Gastrocnemius medialis (tissue), 4 donors: ENCODE measurements at regions of chr7 and their contacts with region 1.

Region 1: GRCh38 chr7:91519241-91520158 is 255.3 kb downstream of the FZD1 start:
- DNase-seq: no peak
- ATAC-seq: no peak
- H3K4me3 ChIP-seq: no peak overlapping the region
- H3K27ac ChIP-seq: no peak overlapping the region
- H3K4me1 ChIP-seq: no peaks in the 10 kb centered on the region
- H3K27me3 ChIP-seq: no peaks in the 10 kb centered on the region
- CTCF ChIP-seq: no peak
- POLR2A ChIP-seq: no peak

Region 2: DNA sequence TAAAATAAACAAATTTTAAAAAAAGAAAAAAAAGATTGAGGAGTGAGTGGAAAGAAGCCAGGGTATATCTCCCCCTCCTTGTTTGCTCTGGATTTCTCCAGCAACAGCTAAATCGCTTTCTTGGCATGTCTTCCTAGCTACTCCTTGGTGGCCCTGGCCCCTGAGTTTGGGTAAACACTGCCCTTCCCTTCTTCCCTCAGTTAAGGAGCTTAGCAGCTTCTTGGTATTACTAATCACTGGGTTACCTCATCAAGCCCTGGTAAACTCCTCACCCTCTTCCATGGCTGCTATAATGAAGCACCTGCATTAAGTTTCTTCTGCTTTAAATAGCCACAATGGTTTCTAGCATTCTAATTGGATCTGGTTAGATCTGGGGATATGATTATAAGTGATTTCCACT is 14.5 kb after region 1 on chr7:
- in situ Hi-C with region 1: no loop called
- intact Hi-C with region 1: no loop called
- DNase-seq: no peak
- ATAC-seq: no peak
- H3K4me3 ChIP-seq: no peak overlapping the region
- H3K27ac ChIP-seq: no peak overlapping the region
- H3K4me1 ChIP-seq: no peaks in the 10 kb centered on the region
- H3K27me3 ChIP-seq: no peaks in the 10 kb centered on the region
- CTCF ChIP-seq: no peak
- POLR2A ChIP-seq: no peak

Region 3: DNA sequence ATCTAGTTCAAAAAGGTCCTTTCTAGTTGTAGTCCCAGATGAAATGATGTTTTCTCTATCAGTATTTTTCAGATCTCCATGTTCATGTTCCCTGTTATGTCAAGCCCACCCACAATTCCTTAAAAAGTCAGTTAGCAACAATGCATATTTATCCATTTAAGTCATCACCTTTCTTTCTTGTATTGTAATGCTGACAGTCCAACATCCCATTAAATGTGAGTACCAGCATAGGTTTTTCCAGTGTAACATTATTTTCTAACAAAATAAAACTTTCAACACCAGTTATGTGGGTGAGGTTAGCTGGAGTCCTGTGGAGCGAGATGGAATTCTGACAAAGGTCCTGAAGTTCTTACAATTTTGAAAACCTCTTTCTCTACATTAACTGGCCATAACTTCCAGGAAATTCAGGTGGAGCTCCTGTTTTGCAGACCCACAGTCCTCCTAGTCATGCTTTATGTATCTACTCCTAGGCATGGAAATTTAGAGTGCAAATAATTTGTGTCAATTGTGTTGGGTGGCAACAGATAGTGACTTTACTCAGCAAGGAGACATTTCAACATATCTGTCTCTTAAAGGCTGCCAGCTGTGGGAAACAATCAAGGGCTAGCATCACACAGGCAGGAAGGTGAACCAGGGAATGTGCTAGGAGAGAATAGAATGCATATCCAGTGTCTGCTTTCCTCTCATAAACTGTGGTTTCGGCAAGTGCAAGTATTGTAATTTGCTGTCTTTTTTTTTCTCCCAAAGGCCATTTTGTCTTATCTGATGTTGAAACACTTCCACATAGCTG is 198.4 kb after region 1 on chr7:
- in situ Hi-C with region 1: no loop called
- intact Hi-C with region 1: no loop called
- DNase-seq: no peak
- ATAC-seq: no peak
- H3K4me3 ChIP-seq: no peak overlapping the region
- H3K27ac ChIP-seq: no peak overlapping the region
- H3K4me1 ChIP-seq: no peaks in the 10 kb centered on the region
- H3K27me3 ChIP-seq: no peaks in the 10 kb centered on the region
- CTCF ChIP-seq: no peak
- POLR2A ChIP-seq: no peak

Region 4: GRCh38 chr7:92436612-92437445 is 917.3 kb after region 1 on chr7:
- in situ Hi-C with region 1: no loop called
- intact Hi-C with region 1: loop called (anchors 5 kb)
- DNase-seq: no peak
- ATAC-seq: no peak
- H3K4me3 ChIP-seq: no peak overlapping the region
- H3K27ac ChIP-seq: no peak overlapping the region
- H3K4me1 ChIP-seq: no peaks in the 10 kb centered on the region
- H3K27me3 ChIP-seq: no peaks in the 10 kb centered on the region
- CTCF ChIP-seq: no peak
- POLR2A ChIP-seq: no peak